Endothelial cell of umbilical vein (primary cell): ENCODE measurements at regions of chr1 and their contacts with region 1.

Region 1: GRCh38 chr1:154558575-154559465 is at the start of gene UBE2Q1:
- DNase-seq: peak; percentile 99
- H3K4me3 ChIP-seq: peak within 1 kb of the TSS; percentile 92
- H3K27ac ChIP-seq: peak within 1 kb of the TSS; percentile 67
- H3K4me1 ChIP-seq: peaks cover 26% of the 10 kb centered on the region
- H3K27me3 ChIP-seq: no peaks in the 10 kb centered on the region
- CTCF ChIP-seq: no peak
- POLR2A ChIP-seq: peak; percentile 57
- total RNA-seq, gene UBE2Q1: 85.4 and 97.2 TPM in 2 replicates

Region 2: DNA sequence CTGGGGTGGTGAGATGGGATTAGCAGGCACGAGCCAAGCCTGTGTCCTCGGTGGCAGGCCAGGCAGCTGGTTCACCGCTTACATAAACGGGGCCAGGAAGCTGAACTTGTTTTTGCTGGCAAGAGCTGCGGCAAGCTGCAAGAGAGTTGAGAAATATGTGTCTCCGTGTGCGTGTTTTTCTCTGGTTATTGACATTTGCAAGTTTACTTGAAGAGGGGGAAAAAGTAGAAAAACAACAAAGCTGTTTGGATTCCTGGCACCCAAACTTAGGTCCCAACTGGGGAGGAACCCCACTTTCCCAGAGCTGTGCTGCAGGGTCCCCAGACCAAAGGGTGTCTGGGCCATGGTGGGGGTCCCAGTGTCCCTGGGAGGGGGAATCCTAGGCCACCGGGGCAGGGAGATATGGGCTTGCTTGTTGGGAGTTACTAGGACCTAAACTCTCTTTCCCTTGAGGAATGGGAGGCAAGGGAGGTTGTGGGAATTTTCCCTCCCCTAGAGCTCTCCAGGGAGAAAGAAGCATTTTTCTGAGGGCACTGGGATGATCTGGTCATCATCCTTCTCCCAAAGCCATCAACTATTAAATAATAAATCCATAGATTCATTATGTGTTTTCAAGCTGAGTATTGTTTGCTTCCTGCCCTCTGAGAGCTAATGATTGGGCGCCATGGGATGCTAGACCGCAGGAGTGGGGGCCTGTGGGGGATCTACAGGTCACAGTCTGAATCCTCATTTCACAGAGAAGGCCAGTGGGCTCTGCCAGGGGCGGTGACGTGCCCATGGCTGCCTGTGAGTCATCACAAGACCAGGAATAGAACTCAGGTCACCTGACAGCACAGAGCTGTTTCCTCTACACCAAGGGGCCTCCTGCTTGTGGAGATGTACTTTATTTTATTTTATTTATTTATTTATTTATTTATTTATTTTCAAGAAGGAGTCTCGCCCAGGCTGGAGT is 138.9 kb before region 1 on chr1:
- CTCF ChIA-PET with region 1: no interaction called
- POLR2A ChIA-PET with region 1: no interaction called
- dilution Hi-C with region 1: no loop called
- intact Hi-C with region 1: loop called (anchors 5 kb)
- DNase-seq: peak; percentile 96
- H3K4me3 ChIP-seq: no peak overlapping the region
- H3K27ac ChIP-seq: peak overlapping the region; percentile 89
- H3K4me1 ChIP-seq: peaks cover 43% of the 10 kb centered on the region
- H3K27me3 ChIP-seq: no peaks in the 10 kb centered on the region
- CTCF ChIP-seq: no peak
- POLR2A ChIP-seq: no peak

Region 3: DNA sequence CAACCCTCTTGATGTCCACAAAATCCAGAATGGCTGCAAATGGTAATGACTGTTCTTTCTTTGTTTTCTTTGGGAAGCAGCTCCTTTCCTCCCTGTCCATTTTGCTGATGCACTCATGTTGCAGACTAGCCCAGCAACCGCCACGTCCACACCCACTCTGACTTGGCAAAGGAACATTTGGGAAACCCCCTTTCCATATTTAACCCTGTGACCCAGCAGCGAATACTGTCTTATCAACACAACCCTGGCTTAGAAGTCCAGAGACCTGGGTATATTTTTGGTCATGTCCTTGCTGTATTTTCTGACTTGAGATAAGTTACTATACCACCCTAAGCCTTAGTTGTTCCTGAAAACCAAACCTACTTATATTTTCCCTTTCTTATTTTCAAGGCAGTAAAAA is 38.5 kb before region 1 on chr1:
- CTCF ChIA-PET with region 1: no interaction called
- POLR2A ChIA-PET with region 1: no interaction called
- dilution Hi-C with region 1: no loop called
- intact Hi-C with region 1: no loop called
- DNase-seq: peak; percentile 66
- H3K4me3 ChIP-seq: no peak overlapping the region
- H3K27ac ChIP-seq: no peak overlapping the region
- H3K4me1 ChIP-seq: peaks cover 18% of the 10 kb centered on the region
- H3K27me3 ChIP-seq: no peaks in the 10 kb centered on the region
- CTCF ChIP-seq: no peak
- POLR2A ChIP-seq: no peak

Region 4: DNA sequence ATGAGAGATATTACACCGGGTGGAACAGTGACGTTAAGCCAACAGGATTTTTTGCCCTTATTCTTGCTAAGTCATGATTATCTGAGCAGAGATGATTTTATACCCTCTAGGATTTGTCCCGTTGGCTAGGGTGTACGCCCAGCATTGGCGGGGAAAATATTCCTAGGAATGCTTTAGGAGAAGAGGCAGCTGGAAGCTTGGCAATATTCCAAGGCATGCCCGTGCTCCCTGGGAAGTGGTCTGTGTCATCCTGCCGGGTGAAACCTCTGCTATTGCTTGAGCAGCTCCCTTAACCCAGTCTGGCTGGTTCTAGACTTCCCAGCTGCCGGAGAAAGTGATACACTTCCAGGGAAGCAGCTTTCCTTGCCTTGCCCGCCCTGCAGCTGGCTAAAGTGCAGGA is 25.0 kb after region 1 on chr1:
- CTCF ChIA-PET with region 1: interaction called, 14 read pairs
- POLR2A ChIA-PET with region 1: no interaction called
- dilution Hi-C with region 1: no loop called
- intact Hi-C with region 1: loop called (anchors 1 kb)
- DNase-seq: peak; percentile 38
- H3K4me3 ChIP-seq: no peak overlapping the region
- H3K27ac ChIP-seq: peak overlapping the region; percentile 58
- H3K4me1 ChIP-seq: peaks cover 28% of the 10 kb centered on the region
- H3K27me3 ChIP-seq: no peaks in the 10 kb centered on the region
- CTCF ChIP-seq: no peak
- POLR2A ChIP-seq: no peak

Region 5: GRCh38 chr1:154741741-154742495 is 183.1 kb after region 1 on chr1:
- CTCF ChIA-PET with region 1: no interaction called
- POLR2A ChIA-PET with region 1: no interaction called
- dilution Hi-C with region 1: no loop called
- intact Hi-C with region 1: no loop called
- DNase-seq: no peak
- H3K4me3 ChIP-seq: no peak overlapping the region
- H3K27ac ChIP-seq: no peak overlapping the region
- H3K4me1 ChIP-seq: no peaks in the 10 kb centered on the region
- H3K27me3 ChIP-seq: peaks cover 28 to 46% of the 10 kb centered on the region in 2 experiments
- CTCF ChIP-seq: no peak
- POLR2A ChIP-seq: no peak

Region 6: GRCh38 chr1:154760469-154760933 is 201.7 kb after region 1 on chr1:
- CTCF ChIA-PET with region 1: interaction called, 26 read pairs
- POLR2A ChIA-PET with region 1: no interaction called
- dilution Hi-C with region 1: no loop called
- intact Hi-C with region 1: loop called (anchors 1 kb)
- DNase-seq: peak; percentile 19
- H3K4me3 ChIP-seq: peak overlapping the region in 1 of 3 experiments; percentile 29
- H3K27ac ChIP-seq: no peak overlapping the region
- H3K4me1 ChIP-seq: peaks cover 3% of the 10 kb centered on the region
- H3K27me3 ChIP-seq: peaks cover 8 to 34% of the 10 kb centered on the region in 2 experiments
- CTCF ChIP-seq: peak; percentile 76 to 86
- POLR2A ChIP-seq: no peak

Region 7: DNA sequence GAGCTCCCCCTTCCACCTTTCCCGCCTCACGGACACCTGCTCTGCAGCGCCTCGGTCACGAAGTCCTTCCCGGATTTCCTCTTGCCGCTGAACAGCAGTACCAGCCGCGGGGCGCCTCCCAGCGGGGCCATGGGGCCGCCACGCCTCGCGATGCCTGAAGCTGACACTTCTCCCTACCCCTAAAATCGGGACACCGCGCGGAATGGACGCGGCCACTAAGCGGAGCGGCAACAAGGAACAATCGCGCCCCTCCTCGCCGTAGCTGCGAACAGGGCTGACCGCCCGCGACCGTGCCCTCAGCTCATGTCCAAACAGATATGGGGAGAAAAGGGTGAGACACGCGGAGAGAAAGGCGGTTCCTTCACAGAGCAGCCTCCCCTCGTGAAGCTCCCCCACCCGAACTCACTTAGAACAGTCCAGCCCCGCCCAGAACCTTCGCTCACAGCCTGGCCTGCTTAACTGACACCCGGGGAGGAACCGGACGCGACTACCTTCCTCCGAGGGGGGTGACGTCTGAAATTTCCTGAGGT is 377.8 kb after region 1 on chr1 and contains the start of gene PMVK:
- CTCF ChIA-PET with region 1: interaction called, 6 read pairs
- POLR2A ChIA-PET with region 1: no interaction called
- dilution Hi-C with region 1: no loop called
- intact Hi-C with region 1: loop called (anchors 2 kb)
- DNase-seq: peak; percentile 94
- H3K4me3 ChIP-seq: peak within 1 kb of the TSS; percentile 26 to 79 (median 55)
- H3K27ac ChIP-seq: peak within 1 kb of the TSS; percentile 92
- H3K4me1 ChIP-seq: peaks cover 8% of the 10 kb centered on the region
- H3K27me3 ChIP-seq: no peaks in the 10 kb centered on the region
- CTCF ChIP-seq: peak in 1 of 2 donors; percentile 36
- POLR2A ChIP-seq: peak; percentile 73
- total RNA-seq, gene PMVK: 22.6 and 23.0 TPM in 2 replicates

Region 8: GRCh38 chr1:155084722-155085503 is 526.1 kb after region 1 on chr1:
- CTCF ChIA-PET with region 1: interaction called, 6 read pairs
- POLR2A ChIA-PET with region 1: no interaction called
- dilution Hi-C with region 1: no loop called
- intact Hi-C with region 1: loop called (anchors 1 kb)
- DNase-seq: peak; percentile 96
- H3K4me3 ChIP-seq: peak overlapping the region; percentile 13 to 68 (median 48)
- H3K27ac ChIP-seq: peak overlapping the region; percentile 45
- H3K4me1 ChIP-seq: peaks cover 12% of the 10 kb centered on the region
- H3K27me3 ChIP-seq: peaks cover 26 to 36% of the 10 kb centered on the region in 2 experiments
- CTCF ChIP-seq: peak; percentile 79 to 90
- POLR2A ChIP-seq: peak; percentile 31